Heart left ventricle (tissue), 16 donors: ENCODE measurements at regions of chr15 and their contacts with region 1.

Region 1: GRCh38 chr15:70763120-70763878 is at the start of gene UACA:
- DNase-seq: peak; percentile 97
- ATAC-seq: peak; percentile 96 to 98 (median 98)
- H3K4me3 ChIP-seq: peak within 1 kb of the TSS; percentile 71 to 97 (median 90)
- H3K27ac ChIP-seq: peak within 1 kb of the TSS; percentile 87 to 99 (median 96)
- H3K4me1 ChIP-seq: peaks cover 0 to 72% (median 45%) of the 10 kb centered on the region in 12 donors
- H3K27me3 ChIP-seq: no peaks in the 10 kb centered on the region
- CTCF ChIP-seq: peak in 6 of 12 donors; percentile 14 to 54 (median 26)
- POLR2A ChIP-seq: peak; percentile 95 to 99
- total RNA-seq, gene UACA: 23.9 to 57.1 (median 51.2) TPM

Region 2: GRCh38 chr15:70679919-70680231 is 83.4 kb before region 1 on chr15:
- intact Hi-C with region 1: loop called in 2 of 10 experiments (anchors 5 kb)
- DNase-seq: no peak
- ATAC-seq: no peak
- H3K4me3 ChIP-seq: no peak overlapping the region
- H3K27ac ChIP-seq: peak overlapping the region in 2 of 12 donors; percentile 4 to 7
- H3K4me1 ChIP-seq: peaks cover 0 to 28% (median 4%) of the 10 kb centered on the region in 12 donors
- H3K27me3 ChIP-seq: no peaks in the 10 kb centered on the region
- CTCF ChIP-seq: no peak
- POLR2A ChIP-seq: no peak

Region 3: GRCh38 chr15:70701891-70702568 is 61.3 kb before region 1 on chr15:
- intact Hi-C with region 1: loop called in 3 of 10 experiments (anchors 1 to 10 kb)
- DNase-seq: peak in 2 of 5 donors; percentile 23 to 38
- ATAC-seq: peak; percentile 77 to 86 (median 80)
- H3K4me3 ChIP-seq: peak overlapping the region in 10 of 12 donors; percentile 25 to 55 (median 42)
- H3K27ac ChIP-seq: peak overlapping the region in 11 of 12 donors; percentile 36 to 74 (median 64)
- H3K4me1 ChIP-seq: peaks cover 4 to 87% (median 59%) of the 10 kb centered on the region in 12 donors
- H3K27me3 ChIP-seq: no peaks in the 10 kb centered on the region
- CTCF ChIP-seq: no peak
- POLR2A ChIP-seq: peak in 1 of 2 donors; percentile 50

Region 4: GRCh38 chr15:70748281-70748747 is 15.0 kb before region 1 on chr15:
- intact Hi-C with region 1: loop called in 1 of 10 experiments (anchors 1 kb)
- DNase-seq: peak in 4 of 5 donors; percentile 64 to 76 (median 68)
- ATAC-seq: peak; percentile 53 to 93 (median 80)
- H3K4me3 ChIP-seq: no peak overlapping the region
- H3K27ac ChIP-seq: peak overlapping the region in 6 of 12 donors; percentile 16 to 46 (median 40)
- H3K4me1 ChIP-seq: peaks cover 16 to 66% (median 57%) of the 10 kb centered on the region in 12 donors
- H3K27me3 ChIP-seq: no peaks in the 10 kb centered on the region
- CTCF ChIP-seq: no peak
- POLR2A ChIP-seq: no peak

Region 5: GRCh38 chr15:70799667-70800450 is 36.6 kb after region 1 on chr15:
- intact Hi-C with region 1: loop called in 2 of 10 experiments (anchors 5 kb)
- DNase-seq: peak in 4 of 5 donors; percentile 36 to 55 (median 44)
- ATAC-seq: peak; percentile 71 to 84 (median 79)
- H3K4me3 ChIP-seq: no peak overlapping the region
- H3K27ac ChIP-seq: peak overlapping the region; percentile 36 to 79 (median 54)
- H3K4me1 ChIP-seq: peaks cover 0 to 43% (median 14%) of the 10 kb centered on the region in 12 donors
- H3K27me3 ChIP-seq: no peaks in the 10 kb centered on the region
- CTCF ChIP-seq: no peak
- POLR2A ChIP-seq: no peak

Region 6: DNA sequence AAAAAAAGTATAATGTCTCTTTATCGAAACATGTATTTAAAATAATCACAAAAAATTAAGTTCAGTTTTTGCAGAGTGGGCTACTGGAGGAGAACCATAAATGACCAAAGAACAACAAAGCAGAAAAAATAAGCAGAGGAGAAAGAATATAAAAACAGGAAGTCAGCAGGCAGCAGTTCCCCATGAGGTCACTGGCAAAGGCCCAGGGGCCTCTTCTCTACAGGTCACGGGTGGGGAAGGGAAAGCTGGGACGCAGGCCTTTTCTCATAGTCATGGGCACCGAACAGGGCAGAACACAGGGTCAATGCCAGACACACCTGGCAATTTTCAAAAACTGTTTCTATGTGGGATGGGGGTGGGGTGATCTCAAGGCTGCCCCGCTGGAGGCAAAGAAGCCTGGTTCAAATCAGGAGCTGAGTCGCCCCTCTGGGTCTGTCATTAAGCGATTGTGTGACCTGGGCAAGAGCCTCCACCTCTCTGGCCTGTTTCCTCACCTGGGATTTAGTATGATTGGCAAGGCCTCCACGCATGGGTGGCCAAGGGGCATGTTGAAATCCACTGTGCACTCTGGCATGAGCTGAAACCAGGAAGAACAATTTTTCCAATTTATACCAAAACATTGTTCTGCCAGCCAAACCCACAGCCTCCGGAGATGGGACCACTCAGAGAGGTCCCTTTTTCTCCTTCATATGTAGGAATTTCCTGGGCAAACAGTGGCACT is 43.9 kb after region 1 on chr15:
- intact Hi-C with region 1: loop called in 2 of 10 experiments (anchors 5 kb)
- DNase-seq: peak; percentile 58 to 80 (median 67)
- ATAC-seq: peak; percentile 7 to 73 (median 46)
- H3K4me3 ChIP-seq: no peak overlapping the region
- H3K27ac ChIP-seq: peak overlapping the region in 8 of 12 donors; percentile 7 to 72 (median 48)
- H3K4me1 ChIP-seq: peaks cover 0 to 45% (median 10%) of the 10 kb centered on the region in 12 donors
- H3K27me3 ChIP-seq: no peaks in the 10 kb centered on the region
- CTCF ChIP-seq: no peak
- POLR2A ChIP-seq: no peak

Region 7: DNA sequence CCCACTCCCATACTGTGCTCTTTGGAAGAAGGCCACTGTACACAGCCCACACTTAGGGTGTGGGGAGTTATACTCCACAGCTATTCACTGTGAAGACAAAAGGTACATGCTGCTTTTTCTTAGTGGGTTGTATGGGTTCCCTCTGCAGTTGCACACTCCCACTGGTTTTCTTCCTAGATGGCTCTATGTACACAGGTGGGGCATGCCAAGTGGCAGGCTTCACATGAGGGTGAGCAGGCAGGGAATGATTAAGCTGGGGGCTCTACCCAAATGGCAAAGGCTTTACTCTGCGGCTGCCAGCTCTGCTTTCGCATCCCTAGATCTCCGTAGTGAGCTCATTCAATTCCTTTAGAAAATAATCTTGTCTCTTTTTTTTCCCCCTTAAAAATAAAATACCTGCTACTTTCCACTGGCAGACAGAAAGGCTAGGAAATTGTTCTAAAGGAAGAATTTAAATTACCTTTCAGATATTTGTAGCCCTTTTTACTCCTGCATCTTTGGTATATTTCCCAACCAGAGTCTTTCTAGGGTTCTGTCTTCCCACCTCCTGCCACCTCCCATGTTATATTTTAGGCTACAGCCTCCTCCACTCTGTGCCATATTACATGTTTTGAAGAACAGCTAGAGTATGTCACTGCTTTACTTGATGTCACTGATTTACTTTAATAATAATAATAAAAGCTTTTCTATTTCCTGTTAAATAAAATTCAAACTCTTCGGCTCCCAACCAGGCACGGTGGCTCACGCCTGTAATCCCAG is 82.5 kb after region 1 on chr15:
- intact Hi-C with region 1: no loop called
- DNase-seq: no peak
- ATAC-seq: peak in 1 of 4 donors; percentile 40
- H3K4me3 ChIP-seq: no peak overlapping the region
- H3K27ac ChIP-seq: no peak overlapping the region
- H3K4me1 ChIP-seq: peaks cover 0 to 14% (median 0%) of the 10 kb centered on the region in 12 donors
- H3K27me3 ChIP-seq: no peaks in the 10 kb centered on the region
- CTCF ChIP-seq: no peak
- POLR2A ChIP-seq: no peak